Transverse colon (tissue), 4 donors: ENCODE measurements at regions of chr2 and their contacts with region 1.

Region 1: DNA sequence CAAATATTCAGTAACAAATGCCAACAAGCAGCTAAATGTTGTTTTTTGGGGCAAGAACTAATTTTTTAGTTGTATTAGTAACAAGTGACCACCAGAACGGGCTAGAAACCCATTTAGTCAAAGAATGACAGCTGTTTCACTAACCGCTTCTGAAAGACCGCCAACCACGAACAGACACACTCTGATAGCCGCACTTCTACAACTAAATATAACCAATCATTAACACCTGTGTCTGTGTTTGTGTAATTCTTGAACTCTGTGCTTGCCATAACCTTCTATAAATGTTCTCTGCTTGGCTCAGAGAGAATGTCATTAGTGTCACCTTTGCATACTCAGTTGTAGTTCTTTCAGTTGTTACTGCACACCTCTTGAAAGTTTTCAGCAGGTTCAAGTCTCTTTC is 526.3 kb upstream of the LRRTM1 start:
- DNase-seq: no peak
- H3K4me3 ChIP-seq: no peak overlapping the region
- H3K27ac ChIP-seq: no peak overlapping the region
- H3K4me1 ChIP-seq: no peaks in the 10 kb centered on the region
- H3K27me3 ChIP-seq: no peaks in the 10 kb centered on the region
- CTCF ChIP-seq: no peak
- EP300 ChIP-seq: no peak
- POLR2A ChIP-seq: no peak

Region 2: GRCh38 chr2:80687524-80687923 is 143.4 kb before region 1 on chr2:
- in situ Hi-C with region 1: no loop called
- intact Hi-C with region 1: no loop called
- DNase-seq: no peak
- H3K4me3 ChIP-seq: no peak overlapping the region
- H3K27ac ChIP-seq: no peak overlapping the region
- H3K4me1 ChIP-seq: no peaks in the 10 kb centered on the region
- H3K27me3 ChIP-seq: no peaks in the 10 kb centered on the region
- CTCF ChIP-seq: no peak
- EP300 ChIP-seq: no peak
- POLR2A ChIP-seq: no peak

Region 3: DNA sequence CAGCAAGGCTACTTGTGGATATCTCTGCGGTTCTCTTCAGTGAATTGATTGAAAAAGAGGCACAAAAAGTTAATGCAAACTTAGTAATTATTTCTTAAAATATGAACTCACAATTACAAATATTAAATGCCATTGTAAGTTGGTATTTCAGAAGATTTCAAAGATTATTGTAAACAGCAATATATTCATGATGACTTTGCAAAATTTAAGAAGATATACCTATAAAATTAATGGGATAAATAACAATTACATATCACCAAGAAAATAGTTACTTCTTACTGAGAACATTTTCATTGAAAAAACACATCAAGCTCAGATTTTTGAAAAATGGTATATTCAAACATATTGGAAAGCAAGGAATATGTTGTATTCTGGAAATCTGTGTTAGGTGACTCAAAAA is 44.3 kb before region 1 on chr2:
- in situ Hi-C with region 1: no loop called
- intact Hi-C with region 1: loop called (anchors 2 kb)
- DNase-seq: no peak
- H3K4me3 ChIP-seq: no peak overlapping the region
- H3K27ac ChIP-seq: no peak overlapping the region
- H3K4me1 ChIP-seq: no peaks in the 10 kb centered on the region
- H3K27me3 ChIP-seq: no peaks in the 10 kb centered on the region
- CTCF ChIP-seq: no peak
- EP300 ChIP-seq: no peak
- POLR2A ChIP-seq: no peak